A549 (cell line): ENCODE measurements at regions of chr1 and their contacts with region 1.

Region 1: GRCh38 chr1:26970810-26971209 is 10.5 kb upstream of the KDF1 start:
- DNase-seq: peak in 1 of 2 experiments; percentile 61
- ATAC-seq: peak in 1 of 2 experiments; percentile 33; a peak in 3 of 6 replicates
- H3K4me3 ChIP-seq: no peak overlapping the region
- H3K27ac ChIP-seq: peak overlapping the region; percentile 20 to 73; a peak in 4 of 6 replicates
- H3K4me1 ChIP-seq: peaks cover 32% of the 10 kb centered on the region
- CTCF ChIP-seq: no peak
- EP300 ChIP-seq: no peak
- POLR2A ChIP-seq: no peak
- RAD21 ChIP-seq: no peak

Region 2: GRCh38 chr1:26986658-26987057 is 15.8 kb after region 1 on chr1:
- CTCF ChIA-PET with region 1: interaction called, 188 read pairs
- POLR2A ChIA-PET with region 1: no interaction called
- DNase-seq: no peak
- ATAC-seq: no peak
- H3K4me3 ChIP-seq: no peak overlapping the region
- H3K27ac ChIP-seq: peak overlapping the region; percentile 36 to 79
- H3K4me1 ChIP-seq: peaks cover 21% of the 10 kb centered on the region
- CTCF ChIP-seq: no peak
- EP300 ChIP-seq: no peak
- POLR2A ChIP-seq: no peak
- RAD21 ChIP-seq: no peak

Region 3: GRCh38 chr1:26993237-26994019 is 22.6 kb after region 1 on chr1 and contains the start of gene TRNP1:
- CTCF ChIA-PET with region 1: interaction called, 188 read pairs
- POLR2A ChIA-PET with region 1: interaction called, 8 read pairs
- DNase-seq: peak; percentile 77 to 91
- ATAC-seq: peak; percentile 36 to 56
- H3K4me3 ChIP-seq: peak within 1 kb of the TSS; percentile 96
- H3K27ac ChIP-seq: peak within 1 kb of the TSS; percentile 100
- H3K4me1 ChIP-seq: peaks cover 53% of the 10 kb centered on the region
- CTCF ChIP-seq: no peak
- EP300 ChIP-seq: no peak
- POLR2A ChIP-seq: peak; percentile 99
- RAD21 ChIP-seq: 0 out of 5 replicates have a peak, but pooled peaks of 1 of the 2 experiments have one; percentile 17
- polyA plus RNA-seq, gene TRNP1: 113 and 134 TPM in 2 replicates

Region 4: GRCh38 chr1:27241677-27242076 is 270.9 kb after region 1 on chr1:
- CTCF ChIA-PET with region 1: no interaction called
- POLR2A ChIA-PET with region 1: no interaction called
- DNase-seq: no peak
- ATAC-seq: no peak
- H3K4me3 ChIP-seq: no peak overlapping the region
- H3K27ac ChIP-seq: no peak overlapping the region
- H3K4me1 ChIP-seq: no peaks in the 10 kb centered on the region
- CTCF ChIP-seq: no peak
- EP300 ChIP-seq: no peak
- POLR2A ChIP-seq: no peak
- RAD21 ChIP-seq: no peak

Region 5: DNA sequence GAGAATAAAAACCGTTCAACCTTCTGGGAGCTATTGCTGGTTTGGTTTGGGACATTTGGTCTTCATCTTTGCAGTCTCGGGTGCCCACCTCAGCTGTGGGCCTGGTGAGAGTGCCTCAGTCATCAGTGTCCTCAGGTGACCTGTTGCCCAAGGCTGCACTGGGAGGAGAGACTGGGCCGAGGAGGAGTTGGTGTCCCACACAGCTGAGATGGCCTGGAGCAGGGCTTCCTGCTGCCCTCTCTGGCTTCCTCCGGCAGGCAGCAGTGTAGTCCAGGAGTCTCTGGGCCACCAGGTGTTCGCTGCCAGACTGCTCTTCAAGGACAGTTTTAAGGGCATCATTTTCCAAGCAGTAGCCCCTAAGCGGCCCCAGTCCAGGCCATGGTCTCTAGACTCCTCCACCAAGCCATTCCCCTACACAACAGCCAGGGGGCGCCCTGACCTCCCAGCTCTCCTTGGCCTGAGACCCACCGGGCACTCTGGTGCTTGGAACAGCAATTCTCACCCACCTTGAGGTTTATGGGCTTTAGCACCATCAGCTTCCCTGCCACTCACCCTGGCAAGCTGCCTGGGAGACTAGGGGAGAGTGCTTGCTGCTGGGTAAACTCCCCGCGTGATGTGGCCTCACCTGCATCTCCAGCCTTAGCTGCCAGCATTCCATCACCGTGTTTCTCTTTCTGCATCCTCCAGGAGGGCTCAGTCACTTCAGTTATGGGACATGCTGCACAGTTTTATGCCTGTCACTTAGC is 361.9 kb after region 1 on chr1:
- CTCF ChIA-PET with region 1: no interaction called
- POLR2A ChIA-PET with region 1: no interaction called
- DNase-seq: peak in 1 of 2 experiments; percentile 69
- ATAC-seq: peak; percentile 66 to 91; a peak in 5 of 6 replicates
- H3K4me3 ChIP-seq: no peak overlapping the region
- H3K27ac ChIP-seq: no peak overlapping the region
- H3K4me1 ChIP-seq: no peaks in the 10 kb centered on the region
- CTCF ChIP-seq: peak; percentile 50
- EP300 ChIP-seq: no peak
- POLR2A ChIP-seq: no peak
- RAD21 ChIP-seq: peak; percentile 24 to 31; a peak in 4 of 5 replicates